ENCODE measurements at regions of chr6 and their contacts with region 1.

Region 1: GRCh38 chr6:34202329-34203201 is 34.1 kb upstream of the HMGA1 start:
- DNase-seq: peak; percentile 43
- ATAC-seq: peak; percentile 82
- H3K4me3 ChIP-seq: no peak overlapping the region
- H3K27ac ChIP-seq: no peak overlapping the region; the same call in 1 of the 2 replicates
- H3K4me1 ChIP-seq: peaks cover 0 to 52% of the 10 kb centered on the region in 2 experiments; a peak in 3 of 4 replicates
- H3K27me3 ChIP-seq: no peaks in the 10 kb centered on the region
- CTCF ChIP-seq: no peak
- POLR2A ChIP-seq: peak; percentile 99
- RAD21 ChIP-seq: no peak

Region 2: DNA sequence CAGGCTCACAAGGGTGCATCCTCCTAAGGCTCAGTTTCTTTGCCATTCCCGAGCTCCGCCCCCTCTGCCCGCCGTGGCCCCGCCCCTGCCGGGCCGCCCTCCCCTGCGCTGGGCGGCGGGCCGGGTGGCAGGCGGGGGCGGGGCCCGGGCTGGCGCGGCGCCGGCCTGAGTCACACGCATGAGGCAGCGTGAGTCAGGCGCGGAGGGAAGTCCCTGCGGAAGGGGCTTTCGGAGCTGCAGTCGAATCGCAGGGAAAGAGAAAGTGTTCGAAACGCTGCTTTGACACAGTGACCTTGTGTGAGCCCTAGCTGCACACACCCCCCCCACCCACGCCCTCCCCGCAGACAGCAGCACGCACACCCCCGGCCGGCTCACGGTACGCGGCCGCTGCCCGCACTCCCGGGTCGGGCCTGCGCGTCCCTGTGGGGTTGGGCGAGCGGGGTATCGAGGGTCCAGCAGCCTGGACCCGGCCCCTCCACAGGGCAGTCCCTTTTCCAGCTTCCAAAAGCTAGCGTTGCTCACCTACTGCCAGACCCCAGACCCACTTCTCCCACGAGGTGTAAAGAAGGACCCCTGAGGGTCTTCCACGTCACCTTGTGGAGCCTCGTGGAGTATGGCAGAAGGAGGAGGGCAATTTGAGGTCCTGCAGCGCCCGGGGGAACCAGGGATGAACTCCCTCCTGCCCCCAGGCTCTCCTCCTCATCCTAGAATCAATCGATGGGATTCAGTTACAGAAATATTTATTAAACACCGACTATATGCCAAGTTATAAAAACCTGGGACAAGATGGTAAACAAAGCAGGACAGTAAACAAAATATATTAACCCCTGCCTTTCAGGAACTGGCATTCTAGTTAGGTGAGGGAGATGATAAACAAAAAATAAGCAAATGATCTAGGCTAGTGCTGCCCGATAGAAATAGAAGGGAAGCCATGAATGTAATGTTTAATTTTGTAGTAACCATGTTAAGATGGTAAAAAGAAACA is 21.7 kb after region 1 on chr6:
- CTCF ChIA-PET with region 1: interaction called, 4 read pairs
- POLR2A ChIA-PET with region 1: interaction called, 20 read pairs
- RAD21 ChIA-PET with region 1: no interaction called
- intact Hi-C with region 1: no loop called
- DNase-seq: no peak
- ATAC-seq: peak; percentile 80
- H3K4me3 ChIP-seq: peak overlapping the region; percentile 36 to 59
- H3K27ac ChIP-seq: peak overlapping the region; percentile 92
- H3K4me1 ChIP-seq: peaks cover 54 to 69% of the 10 kb centered on the region in 2 experiments
- H3K27me3 ChIP-seq: no peaks in the 10 kb centered on the region
- CTCF ChIP-seq: no peak
- POLR2A ChIP-seq: peak; percentile 27
- RAD21 ChIP-seq: no peak

Region 3: DNA sequence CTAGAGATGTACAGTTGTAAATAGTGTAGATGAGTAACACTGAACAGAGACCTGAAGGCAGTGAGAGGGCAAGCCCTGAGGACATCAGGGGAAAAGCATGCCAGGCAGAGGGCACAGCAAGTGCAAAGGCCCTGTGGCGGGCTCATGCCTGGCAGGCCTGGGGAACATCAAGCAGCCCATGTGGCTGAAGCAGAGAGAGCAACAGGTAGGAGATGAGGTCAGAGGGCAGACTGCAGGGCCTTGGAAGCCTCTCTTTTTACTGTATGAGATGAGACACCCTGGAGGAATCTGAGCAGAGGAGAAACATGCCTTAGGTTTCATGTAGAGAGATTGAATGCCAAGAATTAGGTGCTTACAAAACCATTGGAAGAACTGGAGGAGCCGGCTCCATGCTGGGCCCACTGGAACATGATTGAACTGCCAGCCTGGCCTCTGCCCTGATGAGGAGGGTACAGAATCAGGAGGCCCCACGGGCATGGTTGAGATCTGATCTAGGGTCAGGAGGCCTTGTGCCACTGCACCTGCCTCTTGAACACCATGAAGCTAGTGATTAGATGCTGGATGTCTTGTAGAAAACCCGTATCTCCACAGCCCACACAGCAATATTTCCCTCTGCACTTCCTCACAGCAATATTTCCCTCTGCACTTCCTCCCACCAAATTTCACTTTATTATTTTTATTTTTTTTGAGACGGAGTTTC is 28.3 kb after region 1 on chr6:
- CTCF ChIA-PET with region 1: interaction called, 4 read pairs
- POLR2A ChIA-PET with region 1: interaction called, 13 read pairs
- RAD21 ChIA-PET with region 1: no interaction called
- intact Hi-C with region 1: no loop called
- DNase-seq: no peak
- ATAC-seq: no peak
- H3K4me3 ChIP-seq: no peak overlapping the region
- H3K27ac ChIP-seq: peak overlapping the region; percentile 87
- H3K4me1 ChIP-seq: peaks cover 54 to 100% of the 10 kb centered on the region in 2 experiments
- H3K27me3 ChIP-seq: no peaks in the 10 kb centered on the region
- CTCF ChIP-seq: no peak
- POLR2A ChIP-seq: no peak
- RAD21 ChIP-seq: no peak

Region 4: GRCh38 chr6:34236131-34236996 is 33.8 kb after region 1 on chr6 and contains the start of gene HMGA1:
- CTCF ChIA-PET with region 1: interaction called, 3 read pairs
- POLR2A ChIA-PET with region 1: interaction called, 31 read pairs
- RAD21 ChIA-PET with region 1: no interaction called
- intact Hi-C with region 1: no loop called
- DNase-seq: no peak
- ATAC-seq: peak; percentile 66
- H3K4me3 ChIP-seq: peak within 1 kb of the TSS; percentile 69 to 93
- H3K27ac ChIP-seq: peak within 1 kb of the TSS; percentile 95
- H3K4me1 ChIP-seq: peaks cover 33 to 81% of the 10 kb centered on the region in 2 experiments
- H3K27me3 ChIP-seq: no peaks in the 10 kb centered on the region
- CTCF ChIP-seq: no peak; a peak in 1 of 6 replicates
- POLR2A ChIP-seq: peak; percentile 98
- RAD21 ChIP-seq: no peak
- total RNA-seq, gene HMGA1: 2,459 TPM

Region 5: DNA sequence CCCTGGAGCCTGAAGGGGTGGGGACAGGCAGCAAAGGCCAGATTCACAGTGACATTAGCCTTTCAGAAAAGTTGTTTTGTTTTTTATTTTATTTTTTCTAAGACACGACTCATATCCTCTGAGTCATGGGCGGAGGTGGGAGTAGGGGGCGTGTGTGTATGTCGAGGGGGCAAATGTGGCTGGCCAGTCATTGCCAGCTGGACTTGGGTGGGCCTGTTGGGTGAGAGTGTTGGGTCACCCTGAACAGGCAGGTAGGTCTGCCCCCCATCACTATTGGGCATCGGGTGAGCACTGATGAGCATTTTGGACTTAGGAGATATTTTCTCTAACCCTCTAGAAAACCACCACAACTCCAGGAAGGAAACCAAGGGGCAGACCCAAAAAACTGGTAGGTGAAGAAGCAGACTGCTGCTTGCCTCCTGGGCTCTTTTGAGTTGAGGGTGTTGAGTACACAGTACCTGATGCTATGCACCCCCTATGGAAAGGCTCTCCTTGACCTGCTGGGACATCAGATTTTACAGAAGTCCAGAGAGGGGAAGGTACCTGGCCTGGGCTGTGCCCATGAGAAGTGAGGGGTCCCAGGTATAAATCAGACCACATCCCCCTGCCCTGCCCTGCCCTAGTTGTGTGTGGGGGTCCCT is 40.7 kb after region 1 on chr6:
- CTCF ChIA-PET with region 1: interaction called, 5 read pairs
- POLR2A ChIA-PET with region 1: interaction called, 27 read pairs
- RAD21 ChIA-PET with region 1: no interaction called
- intact Hi-C with region 1: loop called (anchors 2 kb)
- DNase-seq: no peak
- ATAC-seq: no peak
- H3K4me3 ChIP-seq: peak overlapping the region; percentile 9 to 69
- H3K27ac ChIP-seq: peak overlapping the region; percentile 95
- H3K4me1 ChIP-seq: peaks cover 78 to 98% of the 10 kb centered on the region in 2 experiments
- H3K27me3 ChIP-seq: no peaks in the 10 kb centered on the region
- CTCF ChIP-seq: no peak
- POLR2A ChIP-seq: no peak
- RAD21 ChIP-seq: no peak